ENCODE measurements at regions of chr6 and their contacts with region 1.

Region 1: DNA sequence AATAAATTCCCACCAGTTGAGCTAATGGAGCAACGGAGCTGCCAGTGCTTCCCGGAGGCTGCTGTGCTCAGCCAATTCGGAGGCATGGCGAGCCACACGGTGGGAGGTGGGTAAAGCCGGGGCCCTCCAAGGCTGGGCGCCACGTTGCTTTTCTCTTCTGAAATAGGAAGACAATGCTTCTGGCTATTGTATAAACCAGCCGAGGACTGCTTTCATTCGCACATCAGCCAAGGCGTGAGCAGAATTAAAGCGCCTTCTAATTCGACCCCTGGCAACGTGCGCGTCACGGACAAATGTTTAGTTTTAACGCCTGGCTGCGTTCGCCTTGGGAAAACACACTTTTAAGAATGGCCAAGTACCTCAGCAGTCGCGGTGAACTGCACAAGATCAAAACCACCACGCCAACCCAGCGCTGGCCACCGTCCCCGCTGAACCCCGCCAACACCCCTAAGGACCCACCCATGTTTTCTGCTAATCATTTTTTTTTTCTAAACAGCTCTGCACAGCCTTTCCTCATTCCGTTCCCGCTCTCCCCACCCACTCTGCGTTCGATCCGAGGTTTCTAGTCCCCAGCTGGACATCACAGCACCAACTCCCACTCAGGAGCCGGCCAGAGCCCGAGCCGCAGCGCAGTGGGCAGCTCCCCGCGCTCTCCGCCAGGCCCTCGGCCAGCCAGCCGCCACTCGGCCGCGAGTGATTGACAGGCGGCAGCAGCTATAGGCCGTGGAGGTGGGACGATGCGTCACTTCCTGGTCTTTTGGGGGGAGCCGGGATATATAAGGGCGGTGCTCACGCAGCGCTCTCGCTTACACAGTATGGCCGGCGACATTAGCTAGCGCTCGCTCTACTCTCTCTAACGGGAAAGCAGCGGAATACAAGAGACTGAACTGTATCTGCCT is at the start of gene AMD1:
- DNase-seq: peak; percentile 89 to 98 (median 96)
- ATAC-seq: peak; percentile 71
- H3K4me3 ChIP-seq: peak within 1 kb of the TSS; percentile 83 to 90
- H3K4me3 Mint-ChIP-seq: peak within 1 kb of the TSS; percentile 99
- H3K27ac ChIP-seq: peak within 1 kb of the TSS; percentile 92 to 95
- H3K27ac Mint-ChIP-seq: peak within 1 kb of the TSS; percentile 99
- H3K4me1 ChIP-seq: peaks cover 25% of the 10 kb centered on the region
- H3K4me1 Mint-ChIP-seq: peaks cover 33% of the 10 kb centered on the region
- H3K27me3 ChIP-seq: no peaks in the 10 kb centered on the region
- H3K27me3 Mint-ChIP-seq: no peaks in the 10 kb centered on the region
- CTCF ChIP-seq: no peak
- total RNA-seq, gene AMD1: 161 to 167 TPM

Region 2: DNA sequence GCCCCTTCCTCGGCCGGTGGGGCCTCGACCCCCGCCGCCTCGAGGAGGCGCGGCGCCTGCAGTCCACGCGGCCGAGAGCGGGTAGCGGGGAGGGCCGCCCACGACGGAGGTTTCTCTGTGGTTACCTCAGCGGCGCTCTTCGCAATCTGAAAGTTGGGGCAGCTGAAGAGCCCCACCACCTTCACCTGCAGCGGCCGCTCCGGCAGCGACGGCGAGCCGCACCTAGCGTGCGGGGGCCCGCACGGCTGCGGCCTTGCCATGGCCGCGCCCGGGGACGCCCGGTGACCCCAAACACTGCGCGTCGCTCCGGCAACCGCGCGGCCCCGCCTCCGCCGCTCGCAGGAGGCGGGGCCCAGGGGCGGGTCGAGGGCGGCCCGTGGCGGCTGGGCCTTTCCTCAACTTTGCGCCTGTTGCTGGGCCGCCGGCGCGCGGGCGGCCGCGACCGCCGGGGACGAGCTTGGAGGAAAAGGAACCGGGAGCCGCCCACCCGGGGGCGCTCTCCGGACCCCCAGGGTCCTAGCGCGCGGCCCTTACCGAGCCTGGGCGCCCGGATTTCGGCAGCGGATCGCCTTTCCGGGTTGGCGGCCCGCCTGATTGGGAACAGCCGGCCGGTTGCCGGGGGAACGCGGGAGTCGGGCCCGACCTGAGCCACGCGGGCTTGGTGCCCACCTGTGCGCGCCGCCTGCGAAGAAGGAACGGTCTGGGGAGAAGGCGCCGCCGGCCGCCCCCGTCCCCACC is 1433.7 kb before region 1 on chr6 and contains the starts of genes PPIL6 and SMPD2:
- CTCF ChIA-PET with region 1: no interaction called
- POLR2A ChIA-PET with region 1: no interaction called
- intact Hi-C with region 1: loop called in 1 of 2 experiments (anchors 10 kb)
- DNase-seq: peak; percentile 61 to 92 (median 75)
- ATAC-seq: peak; percentile 79
- H3K4me3 ChIP-seq: peak within 1 kb of the TSS; percentile 68 to 92
- H3K4me3 Mint-ChIP-seq: peak within 1 kb of the TSS; percentile 89
- H3K27ac ChIP-seq: peak within 1 kb of the TSS; percentile 69 to 83
- H3K27ac Mint-ChIP-seq: peak within 1 kb of the TSS; percentile 93
- H3K4me1 ChIP-seq: peaks cover 26% of the 10 kb centered on the region
- H3K4me1 Mint-ChIP-seq: peaks cover 35% of the 10 kb centered on the region
- H3K27me3 ChIP-seq: no peaks in the 10 kb centered on the region
- H3K27me3 Mint-ChIP-seq: no peaks in the 10 kb centered on the region
- CTCF ChIP-seq: peak; percentile 31
- total RNA-seq, gene PPIL6: 1.3 to 1.4 TPM
- total RNA-seq, gene SMPD2: 22.8 to 23.9 TPM

Region 3: GRCh38 chr6:110179401-110180227 is 694.6 kb before region 1 on chr6 and contains the start of gene WASF1:
- CTCF ChIA-PET with region 1: no interaction called
- POLR2A ChIA-PET with region 1: interaction called, 8 read pairs
- intact Hi-C with region 1: loop called (anchors 2 to 5 kb)
- DNase-seq: peak; percentile 77 to 95 (median 89)
- ATAC-seq: peak; percentile 84
- H3K4me3 ChIP-seq: peak within 1 kb of the TSS; percentile 83 to 96
- H3K4me3 Mint-ChIP-seq: peak within 1 kb of the TSS; percentile 77
- H3K27ac ChIP-seq: peak within 1 kb of the TSS; percentile 72 to 79
- H3K27ac Mint-ChIP-seq: peak within 1 kb of the TSS; percentile 38
- H3K4me1 ChIP-seq: peaks cover 28% of the 10 kb centered on the region
- H3K4me1 Mint-ChIP-seq: peaks cover 7% of the 10 kb centered on the region
- H3K27me3 ChIP-seq: no peaks in the 10 kb centered on the region
- H3K27me3 Mint-ChIP-seq: peaks cover 9% of the 10 kb centered on the region
- CTCF ChIP-seq: no peak
- total RNA-seq, gene WASF1: 1.1 to 1.7 TPM

Region 4: GRCh38 chr6:110609101-110609500 is 265.1 kb before region 1 on chr6:
- CTCF ChIA-PET with region 1: no interaction called
- POLR2A ChIA-PET with region 1: no interaction called
- intact Hi-C with region 1: no loop called
- DNase-seq: no peak
- ATAC-seq: no peak
- H3K4me3 ChIP-seq: no peak overlapping the region
- H3K4me3 Mint-ChIP-seq: no peak overlapping the region
- H3K27ac ChIP-seq: no peak overlapping the region
- H3K27ac Mint-ChIP-seq: no peak overlapping the region
- H3K4me1 ChIP-seq: no peaks in the 10 kb centered on the region
- H3K4me1 Mint-ChIP-seq: no peaks in the 10 kb centered on the region
- H3K27me3 ChIP-seq: no peaks in the 10 kb centered on the region
- H3K27me3 Mint-ChIP-seq: no peaks in the 10 kb centered on the region
- CTCF ChIP-seq: no peak

Region 5: DNA sequence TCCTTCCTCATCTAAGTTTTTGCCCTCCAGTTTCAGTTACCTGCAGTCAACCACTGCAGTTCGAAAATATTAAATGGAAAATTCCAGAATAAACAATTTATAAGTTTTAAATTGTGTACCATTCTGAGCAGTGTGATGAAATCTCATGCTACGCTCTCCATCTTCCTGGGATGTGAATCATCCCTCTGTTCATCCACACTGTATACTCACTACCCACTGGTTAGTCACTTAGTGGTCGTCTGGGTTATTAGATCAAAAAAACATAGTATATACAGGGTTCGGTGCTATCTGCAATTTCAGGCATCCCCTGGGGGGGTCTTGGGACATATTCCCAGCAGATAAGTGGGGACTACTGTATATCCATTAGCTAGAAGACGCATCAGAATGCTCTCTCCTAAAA is 245.9 kb before region 1 on chr6:
- CTCF ChIA-PET with region 1: no interaction called
- POLR2A ChIA-PET with region 1: no interaction called
- intact Hi-C with region 1: no loop called
- DNase-seq: no peak
- ATAC-seq: no peak
- H3K4me3 ChIP-seq: no peak overlapping the region
- H3K4me3 Mint-ChIP-seq: no peak overlapping the region
- H3K27ac ChIP-seq: no peak overlapping the region
- H3K27ac Mint-ChIP-seq: no peak overlapping the region
- H3K4me1 ChIP-seq: no peaks in the 10 kb centered on the region
- H3K4me1 Mint-ChIP-seq: no peaks in the 10 kb centered on the region
- H3K27me3 ChIP-seq: no peaks in the 10 kb centered on the region
- H3K27me3 Mint-ChIP-seq: no peaks in the 10 kb centered on the region
- CTCF ChIP-seq: no peak

Region 6: DNA sequence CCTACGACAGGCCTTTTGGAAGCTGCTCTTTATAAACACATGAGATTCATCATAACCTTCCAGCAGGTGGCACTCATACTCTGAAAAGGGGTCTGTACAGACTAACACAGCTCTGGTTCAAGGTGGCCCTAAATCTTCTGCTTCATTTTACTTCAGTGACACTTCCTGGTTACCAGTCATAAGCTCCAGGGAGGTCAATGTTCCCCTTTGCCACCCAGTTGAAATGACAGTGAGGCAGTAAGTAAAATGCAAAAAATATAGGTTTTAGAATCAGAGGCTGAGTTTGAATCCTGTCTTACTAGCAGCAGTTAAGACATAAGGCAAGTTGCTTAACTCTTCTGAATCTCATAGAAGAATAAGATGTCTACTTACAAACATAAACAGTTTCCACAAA is 191.8 kb before region 1 on chr6:
- CTCF ChIA-PET with region 1: interaction called, 52 read pairs
- POLR2A ChIA-PET with region 1: interaction called, 28 read pairs
- intact Hi-C with region 1: loop called (anchors 1 kb)
- DNase-seq: peak; percentile 18 to 89 (median 63)
- ATAC-seq: peak; percentile 99
- H3K4me3 ChIP-seq: no peak overlapping the region
- H3K4me3 Mint-ChIP-seq: no peak overlapping the region
- H3K27ac ChIP-seq: no peak overlapping the region
- H3K27ac Mint-ChIP-seq: peak overlapping the region; percentile 20
- H3K4me1 ChIP-seq: peaks cover 8% of the 10 kb centered on the region
- H3K4me1 Mint-ChIP-seq: peaks cover 16% of the 10 kb centered on the region
- H3K27me3 ChIP-seq: no peaks in the 10 kb centered on the region
- H3K27me3 Mint-ChIP-seq: no peaks in the 10 kb centered on the region
- CTCF ChIP-seq: peak; percentile 67

Region 7: DNA sequence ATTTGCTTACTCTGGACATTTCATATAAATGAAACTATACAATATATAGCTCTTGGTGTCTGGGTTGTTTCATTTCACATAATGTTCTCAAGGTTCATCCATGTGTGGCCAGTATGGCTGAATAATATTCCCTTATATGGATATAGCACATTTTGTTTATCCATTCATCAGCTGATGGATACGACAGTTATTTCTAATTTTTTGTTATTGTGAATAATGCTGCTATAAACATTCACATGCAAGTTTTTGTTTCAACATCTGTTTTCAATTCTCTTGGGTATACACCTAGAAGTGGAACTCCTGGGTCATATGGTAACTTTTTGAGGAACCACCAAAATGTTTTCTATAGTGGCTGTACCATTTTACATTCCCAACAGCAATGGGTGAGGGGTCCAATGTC is 160.1 kb before region 1 on chr6:
- CTCF ChIA-PET with region 1: no interaction called
- POLR2A ChIA-PET with region 1: no interaction called
- intact Hi-C with region 1: no loop called
- DNase-seq: no peak
- ATAC-seq: no peak
- H3K4me3 ChIP-seq: no peak overlapping the region
- H3K4me3 Mint-ChIP-seq: no peak overlapping the region
- H3K27ac ChIP-seq: no peak overlapping the region
- H3K27ac Mint-ChIP-seq: no peak overlapping the region
- H3K4me1 ChIP-seq: no peaks in the 10 kb centered on the region
- H3K4me1 Mint-ChIP-seq: no peaks in the 10 kb centered on the region
- H3K27me3 ChIP-seq: no peaks in the 10 kb centered on the region
- H3K27me3 Mint-ChIP-seq: no peaks in the 10 kb centered on the region
- CTCF ChIP-seq: no peak

Region 8: DNA sequence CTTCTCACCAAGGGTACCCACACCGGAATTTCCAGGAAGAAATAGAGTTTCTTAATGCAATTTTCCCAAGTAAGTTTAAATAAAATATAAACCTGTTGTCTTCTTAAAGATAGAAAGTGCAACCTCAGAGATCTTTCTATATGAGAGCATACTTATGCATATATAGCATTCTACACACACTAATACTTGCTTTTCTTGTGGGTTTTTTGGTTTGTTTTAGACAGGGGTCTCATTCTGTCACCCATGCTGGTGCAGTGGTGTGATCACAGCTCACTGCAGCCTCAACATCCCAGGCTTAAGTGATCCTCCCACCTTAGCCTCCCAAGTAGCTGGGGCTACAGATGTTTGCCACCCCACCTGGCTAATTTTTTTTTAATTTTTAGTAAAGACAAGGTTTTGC is 16.1 kb after region 1 on chr6:
- CTCF ChIA-PET with region 1: interaction called, 16 read pairs
- POLR2A ChIA-PET with region 1: interaction called, 32 read pairs
- intact Hi-C with region 1: loop called in 1 of 2 experiments (anchors 2 kb)
- DNase-seq: no peak
- ATAC-seq: no peak
- H3K4me3 ChIP-seq: no peak overlapping the region
- H3K4me3 Mint-ChIP-seq: no peak overlapping the region
- H3K27ac ChIP-seq: no peak overlapping the region
- H3K27ac Mint-ChIP-seq: no peak overlapping the region
- H3K4me1 ChIP-seq: peaks cover 23% of the 10 kb centered on the region
- H3K4me1 Mint-ChIP-seq: peaks cover 32% of the 10 kb centered on the region
- H3K27me3 ChIP-seq: no peaks in the 10 kb centered on the region
- H3K27me3 Mint-ChIP-seq: no peaks in the 10 kb centered on the region
- CTCF ChIP-seq: no peak

Region 9: DNA sequence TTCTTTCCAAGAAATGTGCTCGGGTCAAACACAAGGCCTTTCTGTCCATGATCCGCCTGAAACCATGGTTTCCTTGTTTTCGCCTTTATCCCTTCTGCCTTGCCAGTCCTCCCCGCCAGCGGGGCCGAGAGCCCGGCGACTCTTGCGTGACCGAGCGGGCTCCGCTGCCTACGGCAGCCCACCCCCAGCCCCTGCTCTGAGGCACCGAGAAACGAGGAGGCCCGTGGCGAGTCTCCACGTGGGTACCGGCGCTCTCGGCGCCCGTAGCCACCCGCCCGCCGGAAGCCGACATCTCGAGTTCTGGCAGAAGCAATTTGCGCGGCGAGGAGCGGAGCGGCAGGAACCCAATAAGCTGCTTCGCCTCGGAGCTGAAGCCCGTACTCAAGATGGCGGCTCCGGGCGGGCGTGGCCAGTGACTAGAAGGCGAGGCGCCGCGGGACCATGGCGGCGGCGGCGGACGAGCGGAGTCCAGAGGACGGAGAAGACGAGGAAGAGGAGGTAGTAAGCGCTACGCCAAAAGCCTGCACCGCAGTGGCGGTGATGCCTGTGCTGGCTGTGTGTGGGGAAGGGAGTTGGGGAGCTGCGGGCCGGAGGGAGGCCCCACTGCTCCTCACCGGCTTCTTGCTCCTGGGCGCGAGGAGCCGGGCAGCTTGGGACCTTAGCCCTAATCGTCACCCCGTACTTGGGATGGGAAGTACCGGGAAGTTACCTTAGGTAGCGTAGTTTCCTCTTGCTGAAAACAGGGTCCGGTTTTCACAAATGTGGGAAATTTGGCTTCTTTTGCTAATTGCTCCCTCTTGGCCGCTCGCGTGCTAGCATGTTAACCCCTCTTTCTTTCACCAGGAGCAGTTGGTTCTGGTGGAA is 84.3 kb after region 1 on chr6 and contains the start of gene GTF3C6:
- CTCF ChIA-PET with region 1: interaction called, 8 read pairs
- POLR2A ChIA-PET with region 1: interaction called, 39 read pairs
- intact Hi-C with region 1: loop called (anchors 1 kb)
- DNase-seq: peak; percentile 81 to 95 (median 93)
- ATAC-seq: peak; percentile 99
- H3K4me3 ChIP-seq: peak within 1 kb of the TSS; percentile 97 to 99
- H3K4me3 Mint-ChIP-seq: peak within 1 kb of the TSS; percentile 100
- H3K27ac ChIP-seq: peak within 1 kb of the TSS; percentile 91 to 92
- H3K27ac Mint-ChIP-seq: peak within 1 kb of the TSS; percentile 100
- H3K4me1 ChIP-seq: peaks cover 5% of the 10 kb centered on the region
- H3K4me1 Mint-ChIP-seq: peaks cover 21% of the 10 kb centered on the region
- H3K27me3 ChIP-seq: no peaks in the 10 kb centered on the region
- H3K27me3 Mint-ChIP-seq: peaks cover 5% of the 10 kb centered on the region
- CTCF ChIP-seq: no peak
- total RNA-seq, gene GTF3C6: 25.0 to 26.3 TPM

Region 10: GRCh38 chr6:111087106-111087835 is 213.0 kb after region 1 on chr6 and contains the start of gene SLC16A10:
- CTCF ChIA-PET with region 1: no interaction called
- POLR2A ChIA-PET with region 1: no interaction called
- intact Hi-C with region 1: loop called (anchors 5 kb)
- DNase-seq: peak; percentile 70 to 92 (median 83)
- ATAC-seq: peak; percentile 86
- H3K4me3 ChIP-seq: peak within 1 kb of the TSS; percentile 56 to 70
- H3K4me3 Mint-ChIP-seq: peak within 1 kb of the TSS; percentile 96
- H3K27ac ChIP-seq: peak within 1 kb of the TSS; percentile 44 to 55
- H3K27ac Mint-ChIP-seq: peak within 1 kb of the TSS; percentile 96
- H3K4me1 ChIP-seq: peaks cover 25% of the 10 kb centered on the region
- H3K4me1 Mint-ChIP-seq: peaks cover 46% of the 10 kb centered on the region
- H3K27me3 ChIP-seq: no peaks in the 10 kb centered on the region
- H3K27me3 Mint-ChIP-seq: peaks cover 2% of the 10 kb centered on the region
- CTCF ChIP-seq: no peak
- total RNA-seq, gene SLC16A10: 15.7 to 18.5 TPM

Region 11: GRCh38 chr6:111580826-111581505 is 706.7 kb after region 1 on chr6:
- CTCF ChIA-PET with region 1: no interaction called
- POLR2A ChIA-PET with region 1: no interaction called
- intact Hi-C with region 1: no loop called
- DNase-seq: no peak
- ATAC-seq: no peak
- H3K4me3 ChIP-seq: no peak overlapping the region
- H3K4me3 Mint-ChIP-seq: no peak overlapping the region
- H3K27ac ChIP-seq: no peak overlapping the region
- H3K27ac Mint-ChIP-seq: no peak overlapping the region
- H3K4me1 ChIP-seq: no peaks in the 10 kb centered on the region
- H3K4me1 Mint-ChIP-seq: peaks cover 31% of the 10 kb centered on the region
- H3K27me3 ChIP-seq: no peaks in the 10 kb centered on the region
- H3K27me3 Mint-ChIP-seq: no peaks in the 10 kb centered on the region
- CTCF ChIP-seq: no peak

Measured in CD8-positive, alpha-beta T cell (primary cell).